CD4-positive, alpha-beta memory T cell (primary cell): ENCODE measurements at regions of chr6 and their contacts with region 1.

Region 1: GRCh38 chr6:2196079-2196679 is 49.2 kb downstream of the GMDS start:
- DNase-seq: peak in 4 of 5 donors; percentile 24 to 44 (median 37)
- H3K4me3 ChIP-seq: no peak overlapping the region
- H3K4me3 Mint-ChIP-seq: no peak overlapping the region
- H3K27ac ChIP-seq: no peak overlapping the region
- H3K27ac Mint-ChIP-seq: no peak overlapping the region
- H3K4me1 ChIP-seq: no peaks in the 10 kb centered on the region
- H3K4me1 Mint-ChIP-seq: peaks cover 0 to 2% (median 0%) of the 10 kb centered on the region in 4 donors
- H3K27me3 ChIP-seq: no peaks in the 10 kb centered on the region
- H3K27me3 Mint-ChIP-seq: no peaks in the 10 kb centered on the region

Region 2: DNA sequence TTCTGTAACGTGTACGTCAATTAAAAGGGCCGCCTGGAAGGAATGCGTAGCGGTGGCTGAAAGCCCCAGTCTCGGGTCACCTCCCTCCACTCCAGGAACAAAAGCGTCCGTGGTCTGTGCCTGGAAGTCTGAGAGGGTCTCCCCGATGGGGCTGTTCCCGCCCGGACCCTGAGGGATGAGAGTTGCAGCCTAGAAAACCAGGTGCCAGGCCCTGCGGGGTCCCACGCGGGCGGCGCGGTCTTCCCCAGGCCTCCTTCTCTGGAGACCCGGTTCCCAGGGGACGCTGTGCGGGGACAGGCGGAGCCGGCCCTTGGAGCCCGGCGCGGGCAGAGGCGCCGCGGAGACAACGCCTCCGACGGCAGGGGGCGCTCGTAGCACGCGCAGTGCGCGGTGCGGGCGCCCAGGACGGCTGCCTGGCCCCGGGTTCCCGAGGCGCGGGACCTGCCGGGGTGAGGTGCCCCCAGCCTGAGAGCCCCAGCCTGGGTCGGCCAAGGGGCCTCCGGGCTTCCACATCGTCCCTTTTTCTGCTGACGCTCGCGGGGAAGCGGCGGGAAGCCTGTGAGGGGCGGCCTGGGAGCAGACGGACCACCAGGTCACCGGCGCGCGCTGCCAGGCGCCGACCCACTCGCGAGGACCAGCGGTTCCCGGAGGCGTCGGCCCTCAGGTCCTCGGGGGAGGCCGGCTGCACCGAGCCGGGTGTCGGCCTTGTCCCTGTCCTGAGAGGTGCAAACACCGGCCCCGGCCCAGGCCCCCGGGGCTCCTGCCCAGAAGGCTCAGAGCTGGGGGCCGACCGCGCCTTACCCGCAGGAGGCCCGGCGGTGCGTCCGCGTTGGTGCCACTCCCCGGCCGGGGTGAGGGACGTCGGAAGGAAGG is 591.8 kb before region 1 on chr6:
- CTCF ChIA-PET with region 1: interaction called, 35 read pairs
- POLR2A ChIA-PET with region 1: no interaction called
- intact Hi-C with region 1: loop called (anchors 1 kb)
- DNase-seq: peak in 4 of 5 donors; percentile 60 to 71 (median 63)
- H3K4me3 ChIP-seq: no peak overlapping the region
- H3K4me3 Mint-ChIP-seq: peak overlapping the region in 1 of 8 donors; percentile 60
- H3K27ac ChIP-seq: no peak overlapping the region
- H3K27ac Mint-ChIP-seq: peak overlapping the region in 1 of 7 donors; percentile 42
- H3K4me1 ChIP-seq: peaks cover 44% of the 10 kb centered on the region
- H3K4me1 Mint-ChIP-seq: peaks cover 20 to 45% (median 28%) of the 10 kb centered on the region in 4 donors
- H3K27me3 ChIP-seq: peaks cover 71% of the 10 kb centered on the region
- H3K27me3 Mint-ChIP-seq: peaks cover 70% of the 10 kb centered on the region in 2 donors

Region 3: DNA sequence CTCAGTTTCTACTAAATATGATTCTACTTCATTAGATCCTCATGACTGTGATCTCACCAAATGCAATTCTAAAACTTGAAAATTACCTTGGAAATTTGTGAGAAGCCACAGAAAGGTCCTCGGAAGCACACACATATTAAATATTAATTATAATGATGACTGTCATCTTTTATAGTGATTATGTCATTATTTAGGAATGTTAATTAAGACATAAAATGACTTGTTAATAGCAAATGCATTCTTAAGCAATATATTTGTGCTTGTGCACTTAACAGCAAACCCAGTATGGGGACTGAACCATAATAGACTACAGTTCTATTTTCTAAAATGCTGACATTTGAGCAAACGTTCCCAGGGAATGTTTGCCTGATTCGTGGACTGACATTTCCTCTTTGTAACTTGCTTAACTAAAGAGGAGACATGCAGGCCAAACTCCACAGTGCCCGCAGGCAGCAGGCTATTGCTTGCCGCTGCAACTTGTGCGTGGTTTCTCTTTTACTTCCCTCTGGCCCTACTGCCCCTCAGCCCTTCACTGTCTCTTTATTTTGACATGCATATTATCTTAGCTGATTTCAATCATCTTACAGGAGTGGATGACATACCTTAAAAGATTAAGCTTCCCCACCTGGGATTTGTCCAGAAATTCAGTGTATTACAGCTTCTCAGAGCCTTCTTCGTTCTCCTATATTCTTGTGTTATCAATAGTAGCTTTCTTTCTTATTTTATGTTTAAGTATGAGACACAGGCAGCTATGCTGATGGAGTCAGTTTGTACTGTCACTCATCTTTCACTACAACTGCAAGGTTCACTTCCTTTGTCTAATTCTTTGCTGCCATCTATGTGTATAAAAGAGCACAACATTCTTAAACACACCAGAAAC is 92.3 kb before region 1 on chr6:
- CTCF ChIA-PET with region 1: no interaction called
- POLR2A ChIA-PET with region 1: no interaction called
- intact Hi-C with region 1: loop called (anchors 1 kb)
- DNase-seq: peak in 4 of 5 donors; percentile 20 to 31 (median 30)
- H3K4me3 ChIP-seq: no peak overlapping the region
- H3K4me3 Mint-ChIP-seq: no peak overlapping the region
- H3K27ac ChIP-seq: no peak overlapping the region
- H3K27ac Mint-ChIP-seq: no peak overlapping the region
- H3K4me1 ChIP-seq: no peaks in the 10 kb centered on the region
- H3K4me1 Mint-ChIP-seq: no peaks in the 10 kb centered on the region
- H3K27me3 ChIP-seq: no peaks in the 10 kb centered on the region
- H3K27me3 Mint-ChIP-seq: no peaks in the 10 kb centered on the region

Region 4: DNA sequence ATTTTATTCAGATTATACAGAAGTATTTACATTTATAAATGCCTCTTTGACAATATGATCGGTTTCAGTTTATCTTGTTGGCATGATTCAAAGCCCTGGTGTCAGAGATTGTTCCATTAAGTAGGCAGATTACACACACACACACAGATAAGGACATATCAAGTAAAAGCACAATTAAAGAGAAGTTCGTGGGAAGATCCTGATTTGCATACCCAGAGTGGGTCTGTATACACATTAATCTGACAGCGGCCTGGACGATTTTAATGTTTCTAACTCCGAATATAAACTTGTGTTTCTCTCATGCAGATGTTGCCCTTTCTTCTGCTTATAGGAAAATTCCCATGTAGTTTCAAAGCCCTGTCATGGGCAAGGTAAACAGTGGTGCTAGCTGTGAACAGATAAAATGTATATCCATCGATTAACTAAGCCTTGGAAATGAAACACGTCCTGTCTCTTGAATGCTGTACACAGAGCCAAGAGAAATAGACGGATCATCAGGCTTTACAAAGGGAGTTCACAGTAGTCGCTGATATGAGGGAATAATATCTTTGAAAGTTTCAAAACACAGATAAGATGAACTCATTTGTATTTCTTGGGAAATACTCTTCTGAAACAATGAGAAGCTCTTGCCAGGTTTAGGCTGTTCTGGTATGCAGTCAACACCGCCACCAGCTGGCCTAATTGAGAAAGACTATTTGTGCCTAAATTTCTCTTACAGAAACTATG is 157.4 kb after region 1 on chr6:
- CTCF ChIA-PET with region 1: no interaction called
- POLR2A ChIA-PET with region 1: no interaction called
- intact Hi-C with region 1: loop called (anchors 2 kb)
- DNase-seq: peak; percentile 26 to 41 (median 31)
- H3K4me3 ChIP-seq: no peak overlapping the region
- H3K4me3 Mint-ChIP-seq: no peak overlapping the region
- H3K27ac ChIP-seq: no peak overlapping the region
- H3K27ac Mint-ChIP-seq: no peak overlapping the region
- H3K4me1 ChIP-seq: no peaks in the 10 kb centered on the region
- H3K4me1 Mint-ChIP-seq: no peaks in the 10 kb centered on the region
- H3K27me3 ChIP-seq: no peaks in the 10 kb centered on the region
- H3K27me3 Mint-ChIP-seq: no peaks in the 10 kb centered on the region